Mammary epithelial cell (primary cell): ENCODE measurements at regions of chr7 and their contacts with region 1.

Region 1: GRCh38 chr7:153496257-153496656 is 555.9 kb upstream of the DPP6 start:
- DNase-seq: no peak
- H3K4me3 ChIP-seq: no peak overlapping the region
- H3K27ac ChIP-seq: no peak overlapping the region
- H3K4me1 ChIP-seq: no peaks in the 10 kb centered on the region
- H3K27me3 ChIP-seq: no peaks in the 10 kb centered on the region
- CTCF ChIP-seq: no peak

Region 2: GRCh38 chr7:153550173-153550572 is 53.9 kb after region 1 on chr7:
- CTCF ChIA-PET with region 1: no interaction called
- dilution Hi-C with region 1: loop called (anchors 5 kb)
- in situ Hi-C with region 1: no loop called
- intact Hi-C with region 1: no loop called
- DNase-seq: peak; percentile 36
- H3K4me3 ChIP-seq: no peak overlapping the region
- H3K27ac ChIP-seq: no peak overlapping the region
- H3K4me1 ChIP-seq: peaks cover 13% of the 10 kb centered on the region
- H3K27me3 ChIP-seq: no peaks in the 10 kb centered on the region
- CTCF ChIP-seq: no peak